ENCODE measurements at regions of chr1 and their contacts with region 1.

Region 1: DNA sequence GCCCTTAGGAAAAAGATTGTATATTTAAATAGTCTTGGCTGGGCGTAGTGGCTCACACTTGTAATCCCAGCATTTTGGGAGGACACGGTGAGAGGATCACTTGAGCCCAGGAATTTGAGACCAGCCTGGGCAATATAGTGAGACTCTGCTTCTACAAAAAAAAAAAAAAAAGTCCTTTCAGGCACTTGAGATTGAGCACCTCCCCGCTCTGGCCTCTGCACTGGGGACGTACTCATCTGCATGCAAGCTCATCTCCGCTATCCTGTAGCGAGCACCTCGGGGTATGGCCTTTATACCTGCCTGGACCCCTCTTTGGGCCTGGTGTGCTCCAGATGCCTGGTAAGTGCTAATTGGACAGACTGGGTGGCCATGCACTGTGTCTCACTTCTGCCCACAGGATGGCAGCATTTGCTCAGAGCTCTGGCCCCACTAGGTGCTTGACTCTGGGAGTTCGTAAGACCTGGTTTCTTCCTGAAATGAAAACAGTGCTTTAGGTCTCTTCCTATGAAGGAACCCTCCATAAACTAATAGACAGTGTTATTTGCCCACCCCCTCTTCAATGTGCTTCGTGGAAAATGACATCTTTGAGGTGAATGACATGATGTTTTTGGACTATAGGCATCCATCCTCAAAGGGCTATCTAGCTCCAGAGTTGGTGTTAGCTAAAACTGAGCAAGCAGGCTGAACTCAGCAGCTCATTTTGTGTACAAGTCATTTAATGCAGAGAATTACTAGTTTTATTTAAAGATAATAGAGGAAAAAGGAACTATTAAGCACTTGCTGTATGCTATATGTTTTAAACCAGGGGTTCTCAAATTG is 61.7 kb upstream of the ADAR start:
- DNase-seq: peak; percentile 57
- H3K4me3 ChIP-seq: no peak overlapping the region
- H3K27ac ChIP-seq: no peak overlapping the region
- H3K4me1 ChIP-seq: no peaks in the 10 kb centered on the region
- H3K27me3 ChIP-seq: no peaks in the 10 kb centered on the region
- CTCF ChIP-seq: peak; percentile 89 to 93

Region 2: DNA sequence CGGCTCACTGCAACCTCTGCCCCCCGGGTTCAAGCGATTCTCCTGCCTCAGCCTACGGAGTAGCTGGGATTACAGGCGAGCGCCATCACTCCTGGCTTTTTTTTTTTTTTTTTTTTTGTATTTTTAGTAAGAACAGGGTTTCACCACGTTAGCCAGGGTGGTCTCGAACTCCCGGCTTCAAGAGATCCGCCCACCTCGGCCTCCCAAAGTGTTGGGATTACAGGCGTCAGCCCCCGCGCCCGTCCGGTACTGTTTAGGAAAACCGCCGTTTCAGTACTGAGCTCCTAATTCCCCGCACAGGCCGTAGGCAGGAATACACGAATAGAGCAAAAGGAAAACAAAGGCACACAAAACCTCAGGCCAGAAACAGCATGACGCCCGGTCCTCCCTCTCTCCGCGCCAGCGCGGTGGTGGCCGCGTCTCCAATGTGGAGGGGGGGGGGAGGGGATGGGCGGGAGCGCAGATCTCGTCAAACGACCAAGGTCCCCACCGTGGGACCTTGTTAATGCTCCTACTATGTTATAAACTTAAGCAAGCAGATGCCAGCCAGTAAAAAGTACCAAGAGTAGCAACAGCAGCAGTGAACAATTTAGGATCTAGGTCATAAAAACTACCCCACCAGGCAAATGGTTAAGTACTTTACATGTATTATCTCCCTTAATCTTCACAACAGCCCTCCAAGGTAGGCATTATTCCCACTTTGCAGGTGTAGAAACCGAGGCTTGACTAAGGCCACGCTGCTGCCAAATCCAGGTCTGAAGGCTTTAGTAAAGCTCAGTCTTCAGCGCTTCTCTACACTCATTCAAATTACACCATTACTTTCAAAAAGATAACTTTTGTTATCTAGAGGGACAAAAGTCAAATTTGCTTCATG is 61.0 kb before region 1 on chr1:
- CTCF ChIA-PET with region 1: no interaction called
- dilution Hi-C with region 1: no loop called
- in situ Hi-C with region 1: no loop called
- intact Hi-C with region 1: no loop called
- DNase-seq: peak; percentile 42
- H3K4me3 ChIP-seq: peak overlapping the region; percentile 58 to 68 (median 68)
- H3K27ac ChIP-seq: peak overlapping the region; percentile 80
- H3K4me1 ChIP-seq: peaks cover 17% of the 10 kb centered on the region
- H3K27me3 ChIP-seq: no peaks in the 10 kb centered on the region
- CTCF ChIP-seq: no peak

Region 3: DNA sequence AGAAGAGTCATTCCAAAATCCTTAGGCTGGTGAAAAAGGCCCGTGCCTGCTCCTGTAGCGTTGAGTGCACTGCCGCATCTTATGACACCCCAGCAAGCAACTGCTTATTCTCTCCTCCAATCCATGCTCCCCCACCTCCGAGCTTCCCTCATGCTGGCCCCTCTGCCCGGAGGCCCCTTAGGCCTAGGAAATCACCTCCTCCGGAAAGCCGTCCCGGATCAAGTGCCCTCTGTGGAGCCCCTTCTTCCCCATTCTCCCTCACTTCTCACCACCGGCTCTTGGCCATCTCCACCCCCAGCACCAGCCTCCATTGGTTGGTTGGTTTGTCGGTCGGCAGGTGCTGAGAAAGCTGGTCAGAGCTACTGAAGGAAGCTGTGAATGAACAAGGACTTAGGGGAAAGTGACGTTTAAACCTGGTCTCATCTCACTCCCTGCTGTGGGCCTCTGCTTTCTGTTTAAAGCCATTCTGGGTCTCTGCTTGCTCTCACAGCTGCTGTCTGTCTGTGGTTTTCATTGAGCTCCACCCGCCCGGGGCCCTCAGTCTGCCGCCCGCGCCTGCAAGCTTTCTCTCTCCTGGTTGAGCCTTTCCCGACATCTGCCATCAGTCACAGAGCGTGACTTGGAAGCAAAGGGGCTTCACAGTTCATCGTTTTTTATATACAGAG is 78.2 kb after region 1 on chr1:
- CTCF ChIA-PET with region 1: no interaction called
- dilution Hi-C with region 1: loop called (anchors 5 kb)
- in situ Hi-C with region 1: no loop called
- intact Hi-C with region 1: loop called (anchors 1 kb)
- DNase-seq: no peak
- H3K4me3 ChIP-seq: no peak overlapping the region
- H3K27ac ChIP-seq: no peak overlapping the region
- H3K4me1 ChIP-seq: no peaks in the 10 kb centered on the region
- H3K27me3 ChIP-seq: no peaks in the 10 kb centered on the region
- CTCF ChIP-seq: no peak

Region 4: GRCh38 chr1:154819628-154820590 is 150.2 kb after region 1 on chr1:
- CTCF ChIA-PET with region 1: no interaction called
- dilution Hi-C with region 1: no loop called
- in situ Hi-C with region 1: no loop called
- intact Hi-C with region 1: loop called (anchors 1 kb)
- DNase-seq: no peak
- H3K4me3 ChIP-seq: no peak overlapping the region
- H3K27ac ChIP-seq: no peak overlapping the region
- H3K4me1 ChIP-seq: peaks cover 8% of the 10 kb centered on the region
- H3K27me3 ChIP-seq: no peaks in the 10 kb centered on the region
- CTCF ChIP-seq: peak; percentile 56 to 58

Region 5: GRCh38 chr1:154884869-154885701 is 215.4 kb after region 1 on chr1:
- CTCF ChIA-PET with region 1: no interaction called
- dilution Hi-C with region 1: no loop called
- in situ Hi-C with region 1: loop called (anchors 5 to 10 kb)
- intact Hi-C with region 1: no loop called
- DNase-seq: no peak
- H3K4me3 ChIP-seq: no peak overlapping the region
- H3K27ac ChIP-seq: no peak overlapping the region
- H3K4me1 ChIP-seq: no peaks in the 10 kb centered on the region
- H3K27me3 ChIP-seq: no peaks in the 10 kb centered on the region
- CTCF ChIP-seq: no peak

Region 6: DNA sequence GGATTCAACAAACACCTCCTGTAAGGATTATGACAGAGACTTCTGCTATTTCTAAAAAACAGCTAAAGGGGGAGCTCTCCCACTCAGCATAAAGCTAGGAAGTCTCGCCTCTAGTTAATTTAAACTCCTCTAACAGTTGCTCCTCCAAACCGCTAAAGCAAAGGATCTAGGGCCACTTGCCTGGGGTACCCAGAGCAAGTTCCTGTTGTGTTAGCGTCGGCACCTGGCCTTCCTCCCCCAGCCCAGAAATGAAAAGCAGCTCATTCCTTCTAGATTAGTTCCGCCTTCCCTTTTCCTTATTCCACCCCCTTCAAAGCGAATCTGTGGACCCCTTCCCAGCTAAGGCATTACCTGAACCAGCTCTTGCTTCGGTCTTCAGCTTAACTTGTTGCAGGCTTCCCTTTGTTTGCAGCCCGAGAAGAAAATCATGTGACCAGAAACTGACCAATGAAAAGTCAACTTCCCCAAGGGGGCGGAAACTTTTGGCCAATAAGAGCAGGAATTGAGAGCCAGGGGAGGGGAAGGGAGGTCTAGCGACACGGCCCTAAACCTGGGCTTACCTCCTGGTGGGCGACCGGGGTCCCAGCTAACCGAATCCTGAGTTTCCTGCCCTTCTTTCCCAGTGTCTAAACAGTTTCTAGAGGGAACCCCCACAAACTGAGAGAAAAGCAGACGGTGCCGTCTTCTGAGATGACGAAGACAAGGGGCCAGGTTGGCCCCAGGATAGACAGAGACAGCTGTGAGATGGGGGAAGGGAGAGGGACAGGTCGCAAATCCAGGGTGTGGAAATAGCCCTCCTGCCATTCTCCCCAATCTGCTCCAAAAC is 286.3 kb after region 1 on chr1 and contains the start of gene PBXIP1:
- CTCF ChIA-PET with region 1: no interaction called
- dilution Hi-C with region 1: no loop called
- in situ Hi-C with region 1: no loop called
- intact Hi-C with region 1: no loop called
- DNase-seq: peak; percentile 85
- H3K4me3 ChIP-seq: peak within 1 kb of the TSS; percentile 56 to 65 (median 59)
- H3K27ac ChIP-seq: peak within 1 kb of the TSS; percentile 69
- H3K4me1 ChIP-seq: peaks cover 20% of the 10 kb centered on the region
- H3K27me3 ChIP-seq: no peaks in the 10 kb centered on the region
- CTCF ChIP-seq: peak in 1 of 2 donors; percentile 41
- total RNA-seq, gene PBXIP1: 17.7 to 52.0 TPM

Region 7: DNA sequence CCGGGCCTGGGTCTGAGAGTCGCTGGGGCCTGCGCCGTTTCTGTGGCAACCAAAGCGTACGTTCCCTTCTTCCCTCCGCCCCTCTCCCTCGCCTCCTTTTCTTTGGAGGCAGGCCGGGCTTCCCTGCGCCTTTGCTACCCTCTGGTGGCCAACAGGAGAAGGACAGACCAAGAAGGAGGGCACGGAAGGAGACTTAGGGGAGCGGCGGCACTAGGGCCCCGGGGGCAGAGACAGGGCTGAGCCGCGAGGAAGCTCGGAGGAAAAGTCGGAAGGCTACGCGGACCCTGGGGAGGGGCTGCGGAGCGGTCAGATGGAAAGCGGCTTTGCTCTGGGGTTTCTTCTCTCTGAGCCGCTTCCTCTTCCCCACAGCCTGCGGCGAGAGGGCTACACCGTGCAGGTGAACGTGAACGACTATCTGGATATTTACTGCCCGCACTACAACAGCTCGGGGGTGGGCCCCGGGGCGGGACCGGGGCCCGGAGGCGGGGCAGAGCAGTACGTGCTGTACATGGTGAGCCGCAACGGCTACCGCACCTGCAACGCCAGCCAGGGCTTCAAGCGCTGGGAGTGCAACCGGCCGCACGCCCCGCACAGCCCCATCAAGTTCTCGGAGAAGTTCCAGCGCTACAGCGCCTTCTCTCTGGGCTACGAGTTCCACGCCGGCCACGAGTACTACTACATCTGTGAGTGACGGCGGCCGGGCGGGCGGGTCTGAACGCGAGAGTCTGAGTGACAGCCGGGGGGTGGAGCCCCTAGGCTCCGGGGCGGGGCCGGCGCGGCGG is 415.2 kb after region 1 on chr1:
- CTCF ChIA-PET with region 1: no interaction called
- dilution Hi-C with region 1: no loop called
- in situ Hi-C with region 1: no loop called
- intact Hi-C with region 1: loop called (anchors 1 kb)
- DNase-seq: peak; percentile 90
- H3K4me3 ChIP-seq: peak overlapping the region; percentile 71 to 86 (median 73)
- H3K27ac ChIP-seq: peak overlapping the region; percentile 70
- H3K4me1 ChIP-seq: peaks cover 46% of the 10 kb centered on the region
- H3K27me3 ChIP-seq: peaks cover 20% of the 10 kb centered on the region
- CTCF ChIP-seq: peak; percentile 75 to 89

Measured in mammary epithelial cell (primary cell).